Body of pancreas (tissue), 4 donors: ENCODE measurements at regions of chr2 and their contacts with region 1.

Region 1: DNA sequence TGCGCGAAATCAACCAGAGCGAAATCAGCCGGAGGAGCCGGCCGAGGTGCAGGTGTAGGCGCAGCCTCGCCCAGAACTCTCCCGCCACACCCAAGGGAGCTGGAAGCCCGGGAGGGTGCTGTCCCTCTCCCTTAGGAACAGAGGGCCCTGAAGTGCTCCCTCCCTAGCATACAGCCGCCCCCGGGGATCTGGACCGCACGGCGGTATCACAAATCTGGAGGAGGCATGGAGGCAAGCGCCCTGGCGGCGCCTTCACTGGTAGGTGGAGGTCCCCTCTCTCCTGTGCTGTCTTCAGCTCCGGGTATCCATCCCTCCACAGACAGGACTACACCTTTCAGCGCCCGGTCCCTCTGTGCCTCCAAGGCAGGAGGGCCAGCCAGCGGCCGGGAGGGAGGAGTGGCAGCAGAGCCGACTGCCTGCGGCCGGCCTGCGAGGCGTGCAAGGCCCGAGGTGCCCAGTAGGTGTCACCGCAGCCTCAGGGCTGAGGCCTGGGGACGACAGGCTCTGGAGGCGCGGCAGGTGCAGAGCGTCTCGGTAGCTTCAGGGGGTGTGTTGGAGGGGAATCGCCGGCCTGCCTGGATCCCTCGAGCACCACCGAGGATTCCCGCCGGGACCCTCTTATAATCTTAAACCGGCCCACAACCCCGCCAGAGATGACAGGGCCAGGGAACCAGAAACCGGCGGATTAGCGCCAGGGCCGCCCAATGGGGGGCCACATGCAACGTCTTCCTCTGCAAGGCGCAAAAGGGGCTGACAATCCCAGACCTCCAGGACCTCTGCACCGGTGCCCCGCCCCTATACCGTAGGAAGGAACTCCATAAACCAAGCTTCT is 2.8 kb downstream of the IHH start:
- DNase-seq: peak; percentile 81 to 85 (median 84)
- ATAC-seq: peak; percentile 85
- H3K4me3 ChIP-seq: no peak overlapping the region
- H3K27ac ChIP-seq: no peak overlapping the region
- H3K4me1 ChIP-seq: peaks cover 45% of the 10 kb centered on the region
- H3K27me3 ChIP-seq: peaks cover 5 to 23% of the 10 kb centered on the region in 2 donors
- CTCF ChIP-seq: peak; percentile 92 to 98 (median 96)
- POLR2A ChIP-seq: no peak

Region 2: GRCh38 chr2:219119422-219120043 is 61.6 kb after region 1 on chr2:
- intact Hi-C with region 1: loop called (anchors 5 kb)
- DNase-seq: peak; percentile 73 to 81 (median 74)
- ATAC-seq: no peak
- H3K4me3 ChIP-seq: no peak overlapping the region
- H3K27ac ChIP-seq: no peak overlapping the region
- H3K4me1 ChIP-seq: peaks cover 30% of the 10 kb centered on the region
- H3K27me3 ChIP-seq: no peaks in the 10 kb centered on the region
- CTCF ChIP-seq: peak; percentile 66 to 78 (median 74)
- POLR2A ChIP-seq: no peak

Region 3: GRCh38 chr2:219149667-219150066 is 91.7 kb after region 1 on chr2:
- intact Hi-C with region 1: loop called (anchors 5 kb)
- DNase-seq: peak; percentile 38 to 70 (median 50)
- ATAC-seq: peak; percentile 48
- H3K4me3 ChIP-seq: no peak overlapping the region
- H3K27ac ChIP-seq: peak overlapping the region in 1 of 4 donors; percentile 4
- H3K4me1 ChIP-seq: peaks cover 10% of the 10 kb centered on the region
- H3K27me3 ChIP-seq: no peaks in the 10 kb centered on the region
- CTCF ChIP-seq: no peak
- POLR2A ChIP-seq: no peak

Region 4: GRCh38 chr2:219168526-219168925 is 110.6 kb after region 1 on chr2:
- intact Hi-C with region 1: no loop called
- DNase-seq: no peak
- ATAC-seq: no peak
- H3K4me3 ChIP-seq: no peak overlapping the region
- H3K27ac ChIP-seq: no peak overlapping the region
- H3K4me1 ChIP-seq: no peaks in the 10 kb centered on the region
- H3K27me3 ChIP-seq: no peaks in the 10 kb centered on the region
- CTCF ChIP-seq: no peak
- POLR2A ChIP-seq: no peak

Region 5: DNA sequence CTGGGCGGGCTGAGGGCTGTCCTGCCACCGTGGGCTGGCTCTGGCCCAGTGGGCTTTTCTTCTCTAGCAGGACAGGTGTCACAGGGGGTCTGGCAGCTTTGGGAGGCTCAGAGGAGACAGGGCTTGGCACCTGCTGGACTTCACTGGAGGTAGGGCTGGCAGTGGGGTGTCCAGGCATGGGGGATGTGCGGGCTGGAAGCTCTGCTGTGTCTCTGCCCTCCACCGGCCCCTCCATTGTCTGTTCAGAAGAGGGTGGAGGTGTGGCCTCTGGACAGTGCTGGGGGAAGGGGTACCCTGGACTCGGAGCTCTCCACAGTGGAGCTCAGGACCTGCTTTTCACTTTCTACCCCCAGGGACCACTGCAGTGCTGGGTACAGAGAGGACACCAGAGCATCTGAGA is 242.1 kb after region 1 on chr2:
- intact Hi-C with region 1: loop called (anchors 5 kb)
- DNase-seq: no peak
- ATAC-seq: no peak
- H3K4me3 ChIP-seq: no peak overlapping the region
- H3K27ac ChIP-seq: no peak overlapping the region
- H3K4me1 ChIP-seq: peaks cover 9% of the 10 kb centered on the region
- H3K27me3 ChIP-seq: no peaks in the 10 kb centered on the region
- CTCF ChIP-seq: no peak
- POLR2A ChIP-seq: no peak